Natural killer cell (primary cell): ENCODE measurements at regions of chr1 and their contacts with region 1.

Region 1: GRCh38 chr1:218330043-218330623 is 15.0 kb upstream of the TGFB2 start:
- DNase-seq: peak in 1 of 2 donors; percentile 68
- ATAC-seq: peak; percentile 44 to 76 (median 53)
- H3K4me3 ChIP-seq: no peak overlapping the region
- H3K4me3 Mint-ChIP-seq: no peak overlapping the region
- H3K27ac ChIP-seq: no peak overlapping the region
- H3K27ac Mint-ChIP-seq: no peak overlapping the region
- H3K4me1 ChIP-seq: no peaks in the 10 kb centered on the region
- H3K4me1 Mint-ChIP-seq: no peaks in the 10 kb centered on the region
- H3K27me3 ChIP-seq: no peaks in the 10 kb centered on the region
- H3K27me3 Mint-ChIP-seq: no peaks in the 10 kb centered on the region
- CTCF ChIP-seq: peak; percentile 67

Region 2: GRCh38 chr1:218294546-218294945 is 35.6 kb before region 1 on chr1:
- intact Hi-C with region 1: no loop called
- DNase-seq: no peak
- ATAC-seq: no peak
- H3K4me3 ChIP-seq: no peak overlapping the region
- H3K4me3 Mint-ChIP-seq: no peak overlapping the region
- H3K27ac ChIP-seq: no peak overlapping the region
- H3K27ac Mint-ChIP-seq: no peak overlapping the region
- H3K4me1 ChIP-seq: no peaks in the 10 kb centered on the region
- H3K4me1 Mint-ChIP-seq: peaks cover 0 to 5% of the 10 kb centered on the region in 2 donors
- H3K27me3 ChIP-seq: no peaks in the 10 kb centered on the region
- H3K27me3 Mint-ChIP-seq: no peaks in the 10 kb centered on the region
- CTCF ChIP-seq: no peak

Region 3: DNA sequence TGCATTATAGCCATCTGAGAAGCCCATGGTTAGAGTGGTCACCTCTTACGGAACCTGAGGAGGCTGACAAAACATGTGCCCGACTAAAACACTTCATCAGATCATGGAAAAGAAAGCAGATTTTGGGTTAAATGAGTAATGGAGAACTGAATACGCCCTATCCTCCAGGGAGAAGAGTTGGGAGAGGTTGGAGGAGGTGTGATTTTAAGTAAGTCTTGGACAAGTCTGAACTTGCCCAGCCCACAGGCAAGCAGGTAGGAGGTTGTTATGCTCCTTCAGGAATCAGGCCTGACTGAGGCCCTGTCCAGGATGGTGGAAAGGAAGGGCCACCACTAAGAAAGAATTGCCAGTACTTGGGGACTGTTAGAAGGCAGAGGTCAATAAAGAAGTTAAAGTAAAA is 270.8 kb after region 1 on chr1:
- intact Hi-C with region 1: no loop called
- DNase-seq: no peak
- ATAC-seq: no peak
- H3K4me3 ChIP-seq: no peak overlapping the region
- H3K4me3 Mint-ChIP-seq: no peak overlapping the region
- H3K27ac ChIP-seq: no peak overlapping the region
- H3K27ac Mint-ChIP-seq: no peak overlapping the region
- H3K4me1 ChIP-seq: no peaks in the 10 kb centered on the region
- H3K4me1 Mint-ChIP-seq: no peaks in the 10 kb centered on the region
- H3K27me3 ChIP-seq: no peaks in the 10 kb centered on the region
- H3K27me3 Mint-ChIP-seq: no peaks in the 10 kb centered on the region
- CTCF ChIP-seq: no peak

Region 4: GRCh38 chr1:219416594-219417238 is 1086.6 kb after region 1 on chr1:
- intact Hi-C with region 1: loop called (anchors 1 kb)
- DNase-seq: peak in 1 of 2 donors; percentile 62
- ATAC-seq: peak; percentile 40 to 63 (median 52)
- H3K4me3 ChIP-seq: no peak overlapping the region
- H3K4me3 Mint-ChIP-seq: no peak overlapping the region
- H3K27ac ChIP-seq: no peak overlapping the region
- H3K27ac Mint-ChIP-seq: no peak overlapping the region
- H3K4me1 ChIP-seq: no peaks in the 10 kb centered on the region
- H3K4me1 Mint-ChIP-seq: no peaks in the 10 kb centered on the region
- H3K27me3 ChIP-seq: no peaks in the 10 kb centered on the region
- H3K27me3 Mint-ChIP-seq: no peaks in the 10 kb centered on the region
- CTCF ChIP-seq: peak; percentile 57